Ovary (tissue), 10 donors: ENCODE measurements at regions of chr3 and their contacts with region 1.

Region 1: GRCh38 chr3:63993653-63994079 is 29.6 kb downstream of the PSMD6 start:
- DNase-seq: peak; percentile 44 to 69 (median 55)
- H3K4me3 ChIP-seq: no peak overlapping the region
- H3K27ac ChIP-seq: no peak overlapping the region
- H3K4me1 ChIP-seq: peaks cover under 1% of the 10 kb centered on the region
- H3K27me3 ChIP-seq: no peaks in the 10 kb centered on the region
- CTCF ChIP-seq: peak; percentile 60 to 74 (median 68)
- EP300 ChIP-seq: no peak
- POLR2A ChIP-seq: no peak

Region 2: GRCh38 chr3:63349583-63350521 is 643.8 kb before region 1 on chr3:
- intact Hi-C with region 1: loop called in 2 of 4 experiments (anchors 10 kb)
- DNase-seq: peak in 3 of 5 donors; percentile 15 to 28 (median 20)
- H3K4me3 ChIP-seq: no peak overlapping the region
- H3K27ac ChIP-seq: no peak overlapping the region
- H3K4me1 ChIP-seq: no peaks in the 10 kb centered on the region
- H3K27me3 ChIP-seq: no peaks in the 10 kb centered on the region
- CTCF ChIP-seq: peak in 1 of 3 donors; percentile 42
- EP300 ChIP-seq: no peak
- POLR2A ChIP-seq: no peak

Region 3: GRCh38 chr3:63911873-63912767 is 81.5 kb before region 1 on chr3 and contains the start of gene SCAANT1:
- intact Hi-C with region 1: loop called in 2 of 4 experiments (anchors 10 kb)
- DNase-seq: peak; percentile 88 to 93 (median 91)
- H3K4me3 ChIP-seq: peak within 1 kb of the TSS; percentile 81
- H3K27ac ChIP-seq: peak within 1 kb of the TSS; percentile 96 to 100
- H3K4me1 ChIP-seq: peaks cover 5% of the 10 kb centered on the region
- H3K27me3 ChIP-seq: no peaks in the 10 kb centered on the region
- CTCF ChIP-seq: peak in 2 of 3 donors; percentile 11 to 24
- EP300 ChIP-seq: no peak
- POLR2A ChIP-seq: peak; percentile 67
- total RNA-seq, gene SCAANT1: not detected

Region 4: DNA sequence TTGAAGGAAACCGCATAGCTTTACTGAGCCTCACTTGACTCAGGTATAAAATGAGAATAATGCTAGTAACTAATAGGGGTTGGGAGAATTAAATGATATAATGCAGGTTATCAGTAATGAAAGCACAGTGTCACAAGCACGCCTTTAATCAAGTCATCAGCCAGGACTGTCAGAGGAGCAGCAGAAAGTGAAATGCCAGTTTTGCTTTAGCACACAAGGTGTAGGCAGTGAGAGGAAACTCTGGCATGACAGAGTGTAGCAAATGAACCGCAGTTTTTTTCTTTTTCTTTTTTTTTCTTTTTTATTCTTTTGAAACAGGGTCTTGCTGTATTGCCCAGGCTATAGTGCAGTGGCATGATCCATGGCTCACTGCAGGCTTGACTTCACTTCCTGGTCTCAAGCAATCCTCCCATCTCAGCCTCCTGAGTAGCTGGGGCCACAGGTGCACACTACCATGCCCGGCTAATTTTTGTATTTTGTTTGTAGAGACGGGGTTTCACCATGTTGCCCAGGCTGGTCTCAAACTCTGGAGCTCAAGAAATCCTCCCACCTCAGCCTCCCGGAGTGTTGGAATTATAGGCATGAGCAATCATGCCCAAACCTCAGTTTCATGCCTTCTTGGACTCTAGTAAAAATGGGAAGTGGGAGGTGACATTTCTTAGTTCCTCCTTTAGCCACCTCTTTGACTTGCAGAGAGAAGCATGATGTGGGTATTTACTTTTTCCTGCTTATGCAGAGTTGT is 71.8 kb before region 1 on chr3:
- intact Hi-C with region 1: loop called (anchors 10 kb)
- DNase-seq: no peak
- H3K4me3 ChIP-seq: no peak overlapping the region
- H3K27ac ChIP-seq: no peak overlapping the region
- H3K4me1 ChIP-seq: peaks cover 8% of the 10 kb centered on the region
- H3K27me3 ChIP-seq: no peaks in the 10 kb centered on the region
- CTCF ChIP-seq: no peak
- EP300 ChIP-seq: no peak
- POLR2A ChIP-seq: no peak

Region 5: DNA sequence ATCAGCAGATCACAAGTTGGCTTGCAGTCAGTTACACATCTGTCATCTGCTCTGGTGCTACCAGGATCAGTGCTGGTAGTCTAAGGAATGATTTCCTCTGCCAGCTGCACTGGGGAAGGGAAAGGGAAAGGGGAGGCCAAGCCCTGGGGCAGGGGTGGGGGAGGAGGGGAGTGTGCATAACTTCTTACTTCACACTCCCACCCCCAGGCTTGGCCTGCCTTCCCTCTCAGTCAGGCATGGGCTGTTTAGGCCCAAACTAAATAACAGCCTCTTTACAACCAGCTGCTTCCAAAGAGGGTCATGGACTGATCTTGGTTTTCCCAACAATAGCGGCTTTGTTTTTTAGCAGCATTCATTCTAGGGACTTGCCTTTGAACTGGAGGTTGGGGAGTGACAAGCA is 115.8 kb after region 1 on chr3:
- intact Hi-C with region 1: no loop called
- DNase-seq: no peak
- H3K4me3 ChIP-seq: no peak overlapping the region
- H3K27ac ChIP-seq: no peak overlapping the region
- H3K4me1 ChIP-seq: peaks cover 12% of the 10 kb centered on the region
- H3K27me3 ChIP-seq: no peaks in the 10 kb centered on the region
- CTCF ChIP-seq: no peak
- EP300 ChIP-seq: no peak
- POLR2A ChIP-seq: no peak

Region 6: DNA sequence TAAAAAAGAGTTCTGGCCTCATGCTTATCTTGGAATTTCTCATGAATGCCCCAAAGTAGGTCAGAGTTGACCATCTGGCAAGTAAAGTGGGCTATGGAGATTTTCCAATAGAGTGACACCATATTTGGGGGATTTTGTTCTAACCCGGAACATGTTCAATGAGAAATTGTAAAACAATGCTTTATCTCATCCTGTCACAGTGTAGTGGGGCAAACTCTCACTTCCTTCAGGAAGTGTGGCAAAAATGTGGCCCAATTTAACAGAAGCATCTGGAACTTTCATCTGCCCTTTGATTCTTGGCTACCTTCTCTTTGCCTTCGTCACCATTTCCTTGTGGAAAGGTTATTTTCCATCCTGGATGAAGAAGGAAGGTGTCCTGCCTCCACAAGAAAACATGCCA is 623.3 kb after region 1 on chr3:
- intact Hi-C with region 1: no loop called
- DNase-seq: no peak
- H3K4me3 ChIP-seq: no peak overlapping the region
- H3K27ac ChIP-seq: no peak overlapping the region
- H3K4me1 ChIP-seq: peaks cover 6% of the 10 kb centered on the region
- H3K27me3 ChIP-seq: no peaks in the 10 kb centered on the region
- CTCF ChIP-seq: no peak
- EP300 ChIP-seq: no peak
- POLR2A ChIP-seq: no peak